ENCODE measurements at regions of chr1 and their contacts with region 1.

Region 1: GRCh38 chr1:109532365-109533136 is 7.1 kb upstream of the GPR61 start:
- DNase-seq: peak in 1 of 2 donors; percentile 96
- H3K4me3 ChIP-seq: no peak overlapping the region
- H3K27ac ChIP-seq: peak overlapping the region; percentile 40
- H3K4me1 ChIP-seq: peaks cover 7% of the 10 kb centered on the region
- H3K27me3 ChIP-seq: no peaks in the 10 kb centered on the region
- CTCF ChIP-seq: peak; percentile 97 to 99 (median 98)
- POLR2A ChIP-seq: no peak

Region 2: DNA sequence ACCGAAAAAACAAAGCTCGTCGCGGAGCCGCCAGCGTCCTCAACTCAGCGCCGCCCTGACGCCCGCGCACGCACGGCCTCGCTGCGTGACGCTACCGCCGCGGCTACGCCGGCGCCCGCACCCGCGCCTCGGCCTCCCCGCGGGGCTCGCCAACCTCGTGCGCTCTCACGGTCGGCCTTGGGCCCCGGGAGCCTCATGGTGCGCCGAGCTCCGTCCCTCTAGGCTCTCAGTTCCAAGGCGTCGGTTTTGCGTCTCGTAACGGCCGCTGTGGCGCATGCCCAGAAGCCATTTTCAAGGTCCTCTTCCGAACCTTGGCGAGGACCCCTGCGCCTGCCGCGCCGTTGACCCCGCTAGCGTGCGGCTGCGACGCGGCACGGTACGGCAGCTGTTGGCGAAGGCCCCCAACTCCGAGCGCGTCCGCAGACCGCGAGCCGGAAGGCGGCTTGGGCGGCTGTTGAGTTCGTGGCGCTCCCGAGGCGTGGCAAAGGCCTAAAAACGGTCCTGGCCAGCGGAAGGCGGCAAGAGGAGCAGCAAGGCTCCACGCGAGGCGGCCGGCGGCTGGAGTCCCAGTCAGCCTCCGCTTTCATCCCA is 871.4 kb before region 1 on chr1 and contains the start of gene HENMT1:
- intact Hi-C with region 1: no loop called
- DNase-seq: no peak
- H3K4me3 ChIP-seq: peak within 1 kb of the TSS; percentile 78 to 79
- H3K27ac ChIP-seq: peak within 1 kb of the TSS; percentile 88
- H3K4me1 ChIP-seq: peaks cover 4% of the 10 kb centered on the region
- H3K27me3 ChIP-seq: no peaks in the 10 kb centered on the region
- CTCF ChIP-seq: no peak
- POLR2A ChIP-seq: no peak
- total RNA-seq, gene HENMT1: 0.98 TPM

Region 3: DNA sequence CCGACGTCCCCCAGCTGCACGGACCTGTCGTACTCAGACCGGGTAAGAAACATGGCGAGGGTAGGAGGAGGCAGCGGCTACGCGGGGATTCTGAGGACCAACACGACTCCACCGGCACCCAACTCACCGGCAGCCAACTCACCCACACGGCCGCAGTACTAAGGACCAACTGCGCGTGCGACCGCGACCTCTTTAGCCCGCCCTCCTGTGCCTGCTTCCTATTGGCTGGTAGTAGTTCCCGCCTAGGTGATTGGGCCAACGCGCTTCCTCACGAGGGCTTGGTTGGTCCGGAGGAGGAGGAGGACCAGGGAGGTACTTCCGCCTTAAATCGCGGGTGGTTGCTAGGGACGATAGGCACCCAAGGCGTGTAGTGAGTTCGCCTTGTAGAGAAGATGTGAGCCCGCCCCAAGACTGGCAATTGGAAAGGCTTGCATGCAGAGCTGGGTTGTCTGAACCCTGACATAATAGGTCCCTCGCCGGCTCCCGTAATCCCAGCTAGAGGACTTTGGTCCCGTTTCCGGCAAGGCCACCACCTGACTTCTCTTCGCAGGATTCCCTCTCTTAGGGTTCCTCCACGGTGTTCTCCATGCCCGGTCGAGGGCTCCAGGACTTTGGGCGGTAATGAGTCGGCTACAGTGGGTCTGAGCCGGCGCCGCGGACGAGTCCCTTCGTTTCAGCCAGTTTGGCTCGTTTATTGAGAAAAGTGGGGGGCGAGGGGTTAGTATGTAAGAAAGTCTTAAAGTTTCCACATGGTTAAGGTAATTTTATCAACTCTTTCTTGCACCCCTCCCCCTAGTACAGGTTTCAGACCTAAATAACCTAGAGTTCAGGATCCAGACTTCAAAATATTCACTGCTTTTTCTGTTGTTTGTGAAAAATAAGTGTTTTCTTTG is 106.0 kb before region 1 on chr1 and contains the start of gene PSMA5:
- intact Hi-C with region 1: loop called (anchors 10 kb)
- DNase-seq: peak; percentile 99 to 100
- H3K4me3 ChIP-seq: peak within 1 kb of the TSS; percentile 53 to 73
- H3K27ac ChIP-seq: peak within 1 kb of the TSS; percentile 77
- H3K4me1 ChIP-seq: peaks cover 38% of the 10 kb centered on the region
- H3K27me3 ChIP-seq: no peaks in the 10 kb centered on the region
- CTCF ChIP-seq: no peak
- POLR2A ChIP-seq: peak in 1 of 2 donors; percentile 10
- total RNA-seq, gene PSMA5: 23.1 TPM

Region 4: GRCh38 chr1:109499661-109500536 is 32.7 kb before region 1 on chr1:
- intact Hi-C with region 1: loop called (anchors 5 kb)
- DNase-seq: no peak
- H3K4me3 ChIP-seq: no peak overlapping the region
- H3K27ac ChIP-seq: peak overlapping the region; percentile 47
- H3K4me1 ChIP-seq: peaks cover 81% of the 10 kb centered on the region
- H3K27me3 ChIP-seq: no peaks in the 10 kb centered on the region
- CTCF ChIP-seq: no peak
- POLR2A ChIP-seq: no peak

Region 5: GRCh38 chr1:110356405-110356804 is 823.9 kb after region 1 on chr1:
- intact Hi-C with region 1: no loop called
- DNase-seq: no peak
- H3K4me3 ChIP-seq: no peak overlapping the region
- H3K27ac ChIP-seq: no peak overlapping the region
- H3K4me1 ChIP-seq: peaks cover 11% of the 10 kb centered on the region
- H3K27me3 ChIP-seq: no peaks in the 10 kb centered on the region
- CTCF ChIP-seq: no peak
- POLR2A ChIP-seq: no peak